Activated CD4-positive, alpha-beta T cell treated with anti-CD3 and anti-CD28 coated beads, Interleukin-2, amount 10 ng/mL, durations not matched to agents 24 days and 14 days (primary cell): ENCODE measurements at regions of chr21 and their contacts with region 1.

Region 1: DNA sequence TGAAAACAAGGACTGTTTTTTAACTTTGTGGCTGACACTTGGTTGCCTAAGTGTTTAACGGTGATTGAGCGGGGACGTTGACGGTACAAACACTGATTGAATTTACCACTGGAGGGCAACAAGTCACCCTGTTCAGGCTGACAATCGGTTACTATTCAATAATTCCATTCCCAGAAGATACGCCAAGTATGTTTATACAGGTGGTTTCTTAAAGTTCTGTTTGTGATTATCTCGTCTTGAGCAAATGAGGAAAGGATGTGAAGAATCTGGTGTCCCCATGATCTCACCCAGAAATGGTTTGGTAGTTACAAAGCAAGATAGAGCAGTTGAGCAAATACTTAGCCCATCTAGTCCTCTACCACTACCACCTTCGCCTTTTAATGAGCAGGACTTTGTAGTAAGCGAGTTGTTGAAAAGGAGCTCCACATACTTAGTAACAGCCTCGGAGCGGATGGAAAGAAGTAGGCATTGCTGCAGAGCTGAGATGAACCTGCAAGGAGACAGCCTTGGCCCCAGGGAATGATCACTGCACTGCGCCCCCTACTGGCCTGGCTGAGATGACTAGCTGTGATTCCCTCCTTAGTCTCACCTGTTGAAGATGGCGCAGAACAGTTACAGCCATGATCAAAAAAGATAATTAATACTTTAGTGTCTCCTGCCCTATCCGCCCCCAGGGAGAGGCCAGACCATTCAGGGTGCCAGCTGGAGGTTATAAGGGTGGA is 36.3 kb downstream of the IFNAR1 start:
- DNase-seq: peak; percentile 94
- H3K4me3 Mint-ChIP-seq: peak overlapping the region; percentile 73
- H3K27ac Mint-ChIP-seq: peak overlapping the region; percentile 10
- H3K4me1 Mint-ChIP-seq: peaks cover 17% of the 10 kb centered on the region
- H3K27me3 Mint-ChIP-seq: no peaks in the 10 kb centered on the region

Region 2: DNA sequence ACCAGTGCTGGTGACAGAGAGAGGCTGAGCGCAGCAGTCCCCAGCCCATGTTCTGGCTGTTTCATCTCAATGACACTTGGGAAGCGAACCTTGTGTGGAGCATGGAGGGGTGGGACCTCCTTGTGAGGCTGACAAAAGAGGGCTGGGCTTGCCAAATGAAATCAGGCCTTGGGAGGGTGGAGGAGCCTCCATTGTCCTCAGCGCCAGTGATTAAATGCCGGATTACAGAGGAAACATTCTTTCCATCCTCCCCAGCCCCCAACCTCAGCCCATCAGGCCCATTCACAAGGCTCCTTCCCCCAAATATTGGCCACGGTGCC is 526.2 kb before region 1 on chr21:
- intact Hi-C with region 1: loop called (anchors 10 kb)
- DNase-seq: no peak
- H3K4me3 Mint-ChIP-seq: no peak overlapping the region
- H3K27ac Mint-ChIP-seq: no peak overlapping the region
- H3K4me1 Mint-ChIP-seq: no peaks in the 10 kb centered on the region
- H3K27me3 Mint-ChIP-seq: peaks cover 18% of the 10 kb centered on the region

Region 3: GRCh38 chr21:33169359-33169758 is 191.7 kb before region 1 on chr21:
- intact Hi-C with region 1: no loop called
- DNase-seq: no peak
- H3K4me3 Mint-ChIP-seq: no peak overlapping the region
- H3K27ac Mint-ChIP-seq: no peak overlapping the region
- H3K4me1 Mint-ChIP-seq: no peaks in the 10 kb centered on the region
- H3K27me3 Mint-ChIP-seq: peaks cover 27% of the 10 kb centered on the region

Region 4: GRCh38 chr21:33441489-33442477 is 80.7 kb after region 1 on chr21:
- intact Hi-C with region 1: loop called (anchors 1 kb)
- DNase-seq: no peak
- H3K4me3 Mint-ChIP-seq: no peak overlapping the region
- H3K27ac Mint-ChIP-seq: no peak overlapping the region
- H3K4me1 Mint-ChIP-seq: peaks cover 7% of the 10 kb centered on the region
- H3K27me3 Mint-ChIP-seq: no peaks in the 10 kb centered on the region